CD14-positive monocyte (primary cell): ENCODE measurements at regions of chr6 and their contacts with region 1.

Region 1: DNA sequence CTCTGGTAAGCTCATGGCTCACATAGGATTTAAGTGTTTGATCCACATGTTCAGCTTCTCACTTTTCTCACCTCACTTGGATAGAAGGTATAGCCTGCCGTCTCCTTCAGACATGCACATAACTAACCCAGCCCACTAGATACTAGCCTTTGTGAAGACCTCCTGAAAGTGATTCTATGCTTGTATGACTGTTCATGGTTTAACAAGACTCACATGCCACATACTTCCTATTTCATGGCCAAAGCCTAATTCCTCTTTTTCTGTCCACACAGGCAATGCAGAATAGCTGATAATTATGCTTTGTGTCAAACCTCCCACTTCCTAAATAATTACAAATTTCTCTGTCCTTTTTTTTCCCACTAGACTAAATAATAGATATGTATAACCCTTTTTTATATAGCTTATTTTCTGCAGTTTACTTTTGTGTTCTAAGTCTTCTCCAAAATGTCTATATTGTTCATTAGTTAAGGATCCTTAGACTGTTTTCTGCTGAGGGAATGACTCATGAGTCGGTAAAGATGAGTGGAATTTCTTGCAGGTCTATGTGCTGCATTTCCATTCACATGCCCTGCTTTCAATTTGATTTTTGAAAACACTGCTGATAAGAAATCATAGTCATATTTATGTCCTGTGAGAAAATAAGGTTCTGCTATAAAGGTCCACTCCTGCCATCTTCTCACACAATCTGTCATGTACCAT is 43.0 kb downstream of the HDDC2 start:
- DNase-seq: peak; percentile 47 to 69 (median 59)
- H3K4me3 ChIP-seq: no peak overlapping the region
- H3K4me3 Mint-ChIP-seq: no peak overlapping the region
- H3K27ac ChIP-seq: peak overlapping the region in 1 of 2 donors; percentile 16
- H3K27ac Mint-ChIP-seq: peak overlapping the region in 4 of 7 donors; percentile 21 to 84 (median 46)
- H3K4me1 ChIP-seq: peaks cover 14 to 15% of the 10 kb centered on the region in 2 donors
- H3K4me1 Mint-ChIP-seq: peaks cover 15% of the 10 kb centered on the region
- H3K27me3 ChIP-seq: no peaks in the 10 kb centered on the region
- H3K27me3 Mint-ChIP-seq: no peaks in the 10 kb centered on the region
- CTCF ChIP-seq: no peak

Region 2: GRCh38 chr6:125197795-125198269 is 61.0 kb before region 1 on chr6:
- intact Hi-C with region 1: loop called in 1 of 2 experiments (anchors 5 kb)
- DNase-seq: peak in 1 of 3 donors; percentile 40
- H3K4me3 ChIP-seq: no peak overlapping the region
- H3K4me3 Mint-ChIP-seq: no peak overlapping the region
- H3K27ac ChIP-seq: no peak overlapping the region
- H3K27ac Mint-ChIP-seq: peak overlapping the region in 1 of 7 donors; percentile 58
- H3K4me1 ChIP-seq: peaks cover 34 to 48% of the 10 kb centered on the region in 2 donors
- H3K4me1 Mint-ChIP-seq: peaks cover 56% of the 10 kb centered on the region
- H3K27me3 ChIP-seq: no peaks in the 10 kb centered on the region
- H3K27me3 Mint-ChIP-seq: peaks cover 0 to 4% (median 0%) of the 10 kb centered on the region in 3 donors
- CTCF ChIP-seq: no peak